Mammary epithelial cell (primary cell): ENCODE measurements at regions of chr14 and their contacts with region 1.

Region 1: GRCh38 chr14:59126710-59127432 is 61.6 kb upstream of the DAAM1 start:
- DNase-seq: peak; percentile 39
- H3K4me3 ChIP-seq: no peak overlapping the region
- H3K27ac ChIP-seq: no peak overlapping the region
- H3K4me1 ChIP-seq: no peaks in the 10 kb centered on the region
- H3K27me3 ChIP-seq: no peaks in the 10 kb centered on the region
- CTCF ChIP-seq: peak; percentile 58 to 68

Region 2: GRCh38 chr14:58637391-58638230 is 489.3 kb before region 1 on chr14 and contains the start of gene DACT1:
- CTCF ChIA-PET with region 1: no interaction called
- dilution Hi-C with region 1: no loop called
- in situ Hi-C with region 1: no loop called
- intact Hi-C with region 1: loop called (anchors 1 kb)
- DNase-seq: no peak
- H3K4me3 ChIP-seq: peak within 1 kb of the TSS; percentile 47 to 62 (median 49)
- H3K27ac ChIP-seq: no peak within 1 kb of the TSS
- H3K4me1 ChIP-seq: peaks cover 14% of the 10 kb centered on the region
- H3K27me3 ChIP-seq: peaks cover 6% of the 10 kb centered on the region
- CTCF ChIP-seq: no peak
- total RNA-seq, gene DACT1: 0.28 to 3.3 TPM

Region 3: GRCh38 chr14:59028476-59029202 is 98.2 kb before region 1 on chr14:
- CTCF ChIA-PET with region 1: no interaction called
- dilution Hi-C with region 1: loop called (anchors 5 kb)
- in situ Hi-C with region 1: no loop called
- intact Hi-C with region 1: loop called (anchors 1 kb)
- DNase-seq: peak; percentile 58
- H3K4me3 ChIP-seq: no peak overlapping the region
- H3K27ac ChIP-seq: no peak overlapping the region
- H3K4me1 ChIP-seq: no peaks in the 10 kb centered on the region
- H3K27me3 ChIP-seq: peaks cover 1% of the 10 kb centered on the region
- CTCF ChIP-seq: peak; percentile 89 to 97

Region 4: GRCh38 chr14:59189786-59190771 is 63.2 kb after region 1 on chr14:
- CTCF ChIA-PET with region 1: no interaction called
- dilution Hi-C with region 1: no loop called
- in situ Hi-C with region 1: loop called in 1 of 2 experiments (anchors 10 kb)
- intact Hi-C with region 1: loop called (anchors 2 kb)
- DNase-seq: peak; percentile 89
- H3K4me3 ChIP-seq: peak overlapping the region; percentile 74 to 91 (median 82)
- H3K27ac ChIP-seq: peak overlapping the region; percentile 94
- H3K4me1 ChIP-seq: peaks cover 24% of the 10 kb centered on the region
- H3K27me3 ChIP-seq: no peaks in the 10 kb centered on the region
- CTCF ChIP-seq: peak in 1 of 2 donors; percentile 26

Region 5: DNA sequence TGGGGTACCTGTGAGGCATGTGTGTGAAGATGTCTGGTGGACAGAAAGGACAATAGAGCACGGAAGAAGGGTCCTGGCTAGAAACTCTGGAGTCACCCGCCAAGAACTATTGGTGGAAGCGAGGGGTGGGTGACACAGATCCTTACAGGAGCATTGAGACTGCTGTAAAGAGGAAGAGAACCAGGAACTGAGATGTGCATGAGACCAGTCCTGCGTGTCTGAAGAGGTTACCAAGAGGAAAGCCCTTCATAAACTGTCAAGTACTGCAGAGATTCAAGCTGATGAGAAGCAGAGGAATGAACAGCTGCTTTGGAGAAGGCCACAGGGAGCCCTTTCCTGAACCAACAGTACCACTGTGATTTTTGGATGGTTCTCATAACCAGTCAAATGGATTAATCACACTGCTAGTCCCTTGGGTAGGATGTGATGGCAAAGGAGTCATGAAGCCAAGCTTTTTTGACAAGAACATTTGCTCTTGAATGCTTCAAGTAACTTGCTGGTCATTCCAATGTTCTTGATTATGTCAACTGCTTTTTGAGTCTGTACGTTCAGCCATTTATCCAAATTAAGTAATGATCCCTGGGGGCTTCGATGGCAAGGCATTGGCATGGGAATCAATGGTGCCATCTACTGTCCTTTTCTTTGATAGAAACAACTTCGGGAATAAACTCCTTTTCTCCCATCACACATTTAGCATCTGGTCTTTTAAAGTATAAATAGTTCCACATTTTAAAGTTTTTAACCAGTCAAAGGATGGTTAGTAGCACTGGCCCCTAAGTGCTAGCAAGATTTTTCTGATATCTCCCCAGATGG is 295.4 kb after region 1 on chr14:
- CTCF ChIA-PET with region 1: no interaction called
- dilution Hi-C with region 1: no loop called
- in situ Hi-C with region 1: no loop called
- intact Hi-C with region 1: loop called (anchors 1 kb)
- DNase-seq: no peak
- H3K4me3 ChIP-seq: no peak overlapping the region
- H3K27ac ChIP-seq: no peak overlapping the region
- H3K4me1 ChIP-seq: no peaks in the 10 kb centered on the region
- H3K27me3 ChIP-seq: no peaks in the 10 kb centered on the region
- CTCF ChIP-seq: peak; percentile 25 to 43

Region 6: DNA sequence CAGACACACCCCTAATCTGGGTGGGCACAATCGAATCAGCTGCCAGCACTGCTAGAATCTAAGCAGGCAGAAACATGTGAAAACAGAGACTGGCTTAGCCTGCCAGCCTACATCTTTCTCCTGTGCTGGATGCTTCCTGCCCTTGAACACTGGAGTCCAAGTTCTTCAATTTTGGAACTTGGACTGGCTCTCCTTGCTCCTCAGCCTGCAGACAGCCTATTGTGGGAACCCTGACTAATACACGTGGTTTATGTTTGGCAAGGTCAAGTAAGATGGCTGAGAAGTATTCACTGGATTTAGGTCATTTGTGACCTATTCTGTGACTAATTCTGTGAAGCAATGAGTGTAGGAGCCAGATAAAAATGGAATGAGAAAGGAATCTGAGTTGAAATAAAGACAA is 327.3 kb after region 1 on chr14:
- CTCF ChIA-PET with region 1: no interaction called
- dilution Hi-C with region 1: loop called (anchors 5 kb)
- in situ Hi-C with region 1: no loop called
- intact Hi-C with region 1: no loop called
- DNase-seq: peak; percentile 85
- H3K4me3 ChIP-seq: no peak overlapping the region
- H3K27ac ChIP-seq: no peak overlapping the region
- H3K4me1 ChIP-seq: peaks cover 9% of the 10 kb centered on the region
- H3K27me3 ChIP-seq: no peaks in the 10 kb centered on the region
- CTCF ChIP-seq: no peak

Region 7: GRCh38 chr14:60184146-60184904 is 1057.5 kb after region 1 on chr14:
- CTCF ChIA-PET with region 1: no interaction called
- dilution Hi-C with region 1: no loop called
- in situ Hi-C with region 1: loop called in 1 of 2 experiments (anchors 25 kb)
- intact Hi-C with region 1: no loop called
- DNase-seq: peak; percentile 39
- H3K4me3 ChIP-seq: peak overlapping the region; percentile 4 to 50 (median 37)
- H3K27ac ChIP-seq: peak overlapping the region; percentile 40
- H3K4me1 ChIP-seq: peaks cover 18% of the 10 kb centered on the region
- H3K27me3 ChIP-seq: no peaks in the 10 kb centered on the region
- CTCF ChIP-seq: peak; percentile 60 to 65